ENCODE measurements at regions of chr10 and their contacts with region 1.

Region 1: DNA sequence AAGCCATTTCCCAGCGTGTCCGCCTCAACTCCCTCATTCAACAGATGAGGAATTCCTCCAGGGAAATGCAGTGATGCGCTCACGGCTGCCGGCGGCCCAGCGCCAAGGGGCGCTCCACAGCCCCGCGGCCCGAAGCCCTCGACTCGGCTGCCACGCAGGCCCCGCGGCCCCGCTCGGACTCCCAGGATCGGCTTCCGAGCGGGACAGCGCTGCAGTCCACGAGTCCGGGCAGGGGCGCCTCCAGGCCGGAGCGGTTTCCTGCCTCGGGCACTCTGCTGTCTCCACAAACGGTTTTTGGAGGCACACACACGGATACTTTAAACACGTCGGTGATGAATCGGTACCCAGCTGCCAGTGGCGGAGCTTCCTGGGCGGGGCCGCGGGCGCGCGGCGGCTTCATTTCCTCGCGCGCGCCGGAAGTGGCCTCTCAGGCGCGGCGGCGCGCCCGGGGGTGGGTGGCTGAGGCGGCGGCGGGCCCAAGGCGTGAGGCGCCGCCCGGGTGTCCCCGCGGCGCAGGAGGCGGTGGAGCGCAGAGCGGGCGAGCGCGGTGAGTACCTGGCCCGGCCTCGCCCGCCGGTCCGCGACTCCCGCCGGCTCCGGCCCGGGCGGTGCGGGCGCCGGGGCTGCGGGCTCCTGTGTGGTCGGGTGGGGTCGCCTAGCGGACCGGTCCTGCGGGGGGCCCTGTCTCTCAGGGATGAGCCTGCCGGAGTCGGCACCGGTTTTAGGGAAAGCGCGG is at the start of gene CSGALNACT2:
- DNase-seq: peak; percentile 86
- ATAC-seq: peak; percentile 68
- H3K4me3 ChIP-seq: peak within 1 kb of the TSS; percentile 98
- H3K27ac ChIP-seq: peak within 1 kb of the TSS; percentile 94
- H3K4me1 ChIP-seq: peaks cover 6% of the 10 kb centered on the region
- H3K27me3 ChIP-seq: no peaks in the 10 kb centered on the region; the same call in 1 of the 2 replicates
- CTCF ChIP-seq: 0 out of 2 replicates have a peak, but pooled peaks have one; percentile 5
- POLR2A ChIP-seq: peak; percentile 84
- RAD21 ChIP-seq: no peak
- total RNA-seq, gene CSGALNACT2: 6.5 and 11.4 TPM in 2 replicates

Region 2: GRCh38 chr10:43048574-43049339 is 89.4 kb before region 1 on chr10:
- CTCF ChIA-PET with region 1: no interaction called
- POLR2A ChIA-PET with region 1: no interaction called
- dilution Hi-C with region 1: no loop called
- in situ Hi-C with region 1: no loop called
- intact Hi-C with region 1: no loop called
- DNase-seq: peak; percentile 45
- ATAC-seq: peak; percentile 74
- H3K4me3 ChIP-seq: no peak overlapping the region
- H3K27ac ChIP-seq: no peak overlapping the region
- H3K4me1 ChIP-seq: peaks cover 2% of the 10 kb centered on the region; the same call in 1 of the 2 replicates
- H3K27me3 ChIP-seq: no peaks in the 10 kb centered on the region; the same call in none of the 2 replicates
- CTCF ChIP-seq: no peak
- POLR2A ChIP-seq: no peak
- RAD21 ChIP-seq: no peak

Region 3: GRCh38 chr10:43160046-43160918 is 22.1 kb after region 1 on chr10:
- CTCF ChIA-PET with region 1: interaction called, 3 read pairs
- POLR2A ChIA-PET with region 1: no interaction called
- dilution Hi-C with region 1: no loop called
- in situ Hi-C with region 1: no loop called
- intact Hi-C with region 1: loop called (anchors 2 kb)
- DNase-seq: peak; percentile 90
- ATAC-seq: peak; percentile 75
- H3K4me3 ChIP-seq: no peak overlapping the region
- H3K27ac ChIP-seq: peak overlapping the region; percentile 56; the same call in 1 of the 2 replicates
- H3K4me1 ChIP-seq: peaks cover 12% of the 10 kb centered on the region
- H3K27me3 ChIP-seq: no peaks in the 10 kb centered on the region
- CTCF ChIP-seq: no peak
- POLR2A ChIP-seq: no peak
- RAD21 ChIP-seq: no peak

Region 4: GRCh38 chr10:43407576-43408330 is 269.6 kb after region 1 on chr10:
- CTCF ChIA-PET with region 1: no interaction called
- POLR2A ChIA-PET with region 1: no interaction called
- dilution Hi-C with region 1: no loop called
- in situ Hi-C with region 1: no loop called
- intact Hi-C with region 1: loop called (anchors 5 kb)
- DNase-seq: peak; percentile 89
- ATAC-seq: peak; percentile 36
- H3K4me3 ChIP-seq: peak overlapping the region; percentile 82
- H3K27ac ChIP-seq: peak overlapping the region; percentile 96
- H3K4me1 ChIP-seq: peaks cover 2% of the 10 kb centered on the region; the same call in 1 of the 2 replicates
- H3K27me3 ChIP-seq: no peaks in the 10 kb centered on the region
- CTCF ChIP-seq: peak; percentile 43
- POLR2A ChIP-seq: peak; percentile 94
- RAD21 ChIP-seq: no peak

Measured in IMR-90 (cell line).